ENCODE measurements at regions of chr19 and their contacts with region 1.

Region 1: GRCh38 chr19:35818445-35818844 is 5.8 kb upstream of the PRODH2 start:
- DNase-seq: no peak
- H3K4me3 ChIP-seq: no peak overlapping the region
- H3K27ac ChIP-seq: no peak overlapping the region
- H3K27me3 ChIP-seq: peaks cover 10% of the 10 kb centered on the region
- CTCF ChIP-seq: no peak

Region 2: GRCh38 chr19:35693830-35694599 is 124.4 kb before region 1 on chr19:
- CTCF ChIA-PET with region 1: interaction called, 22 read pairs
- POLR2A ChIA-PET with region 1: no interaction called
- DNase-seq: peak; percentile 54
- H3K4me3 ChIP-seq: no peak overlapping the region
- H3K27ac ChIP-seq: no peak overlapping the region
- H3K27me3 ChIP-seq: peaks cover 4% of the 10 kb centered on the region
- CTCF ChIP-seq: peak; percentile 99

Region 3: DNA sequence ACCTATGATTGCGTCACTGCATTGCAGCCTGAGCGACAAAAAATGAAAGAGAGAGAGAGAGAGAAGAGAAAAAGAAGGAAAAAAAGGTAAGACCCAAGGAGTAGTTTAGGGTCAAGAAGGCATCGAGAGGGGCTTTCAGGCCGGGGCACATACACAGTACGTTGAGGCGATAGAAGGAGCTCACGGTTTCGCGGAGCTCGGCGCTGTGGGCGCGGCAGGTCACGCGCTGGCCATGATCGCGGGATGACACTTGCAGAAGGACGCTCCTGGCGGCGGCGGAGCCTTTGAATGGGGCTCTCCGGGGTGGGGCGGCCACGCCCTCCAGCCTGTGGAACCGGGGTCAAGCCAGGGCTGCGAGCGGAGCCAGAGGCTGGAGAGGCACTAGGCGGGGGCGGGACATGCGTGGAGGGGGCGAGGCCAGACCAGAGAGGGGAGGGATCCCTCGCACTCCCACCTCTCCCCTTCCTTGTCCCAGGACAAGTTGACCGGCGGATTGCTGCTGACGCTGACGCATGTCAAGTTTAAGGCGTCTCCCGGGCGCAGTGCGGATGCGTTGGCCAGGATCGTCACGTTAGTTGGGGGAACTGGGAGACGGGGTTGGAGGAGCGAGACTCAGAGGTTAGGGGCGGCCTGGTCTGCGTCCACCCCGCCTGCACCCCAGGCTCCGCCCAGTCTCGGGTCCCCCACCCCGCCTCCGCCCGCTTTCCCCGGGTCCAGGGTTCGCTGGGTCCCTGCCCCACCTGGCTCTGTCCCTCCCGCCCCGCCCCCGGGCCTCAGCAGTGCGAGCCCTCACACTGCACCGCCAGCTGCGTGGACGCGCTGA is 27.0 kb after region 1 on chr19:
- CTCF ChIA-PET with region 1: no interaction called
- POLR2A ChIA-PET with region 1: no interaction called
- DNase-seq: no peak
- H3K4me3 ChIP-seq: no peak overlapping the region
- H3K27ac ChIP-seq: no peak overlapping the region
- H3K27me3 ChIP-seq: peaks cover 63% of the 10 kb centered on the region
- CTCF ChIP-seq: no peak

Region 4: GRCh38 chr19:35977446-35978222 is 159.2 kb after region 1 on chr19:
- CTCF ChIA-PET with region 1: no interaction called
- POLR2A ChIA-PET with region 1: no interaction called
- DNase-seq: no peak
- H3K4me3 ChIP-seq: no peak overlapping the region
- H3K27ac ChIP-seq: no peak overlapping the region
- H3K27me3 ChIP-seq: peaks cover 8% of the 10 kb centered on the region
- CTCF ChIP-seq: no peak